GM10248 (cell line): ENCODE measurements at regions of chr2 and their contacts with region 1.

Region 1: GRCh38 chr2:44668336-44668735 is 273.2 kb upstream of the SIX3 start:
- DNase-seq: peak; percentile 37
- CTCF ChIP-seq: peak; percentile 36

Region 2: DNA sequence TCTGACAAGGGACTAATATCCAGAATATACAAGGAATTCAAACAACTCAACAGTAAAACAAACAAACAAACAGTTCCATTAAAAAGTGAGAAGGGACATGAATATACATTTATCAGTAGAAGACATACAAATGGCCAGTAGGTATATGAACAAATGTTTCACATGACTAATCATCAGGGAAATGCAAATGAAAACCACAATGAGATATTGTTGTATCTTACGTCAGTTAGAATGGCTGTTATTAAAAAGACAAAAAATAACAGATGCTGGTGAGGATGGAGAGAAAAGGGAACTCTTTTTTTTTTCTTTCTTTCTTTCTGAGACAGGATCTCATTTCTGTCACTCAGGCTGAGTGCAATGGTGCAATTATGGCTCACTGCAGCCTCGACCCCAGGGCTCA is 131.1 kb before region 1 on chr2:
- CTCF ChIA-PET with region 1: no interaction called
- POLR2A ChIA-PET with region 1: no interaction called
- DNase-seq: no peak
- CTCF ChIP-seq: no peak

Region 3: DNA sequence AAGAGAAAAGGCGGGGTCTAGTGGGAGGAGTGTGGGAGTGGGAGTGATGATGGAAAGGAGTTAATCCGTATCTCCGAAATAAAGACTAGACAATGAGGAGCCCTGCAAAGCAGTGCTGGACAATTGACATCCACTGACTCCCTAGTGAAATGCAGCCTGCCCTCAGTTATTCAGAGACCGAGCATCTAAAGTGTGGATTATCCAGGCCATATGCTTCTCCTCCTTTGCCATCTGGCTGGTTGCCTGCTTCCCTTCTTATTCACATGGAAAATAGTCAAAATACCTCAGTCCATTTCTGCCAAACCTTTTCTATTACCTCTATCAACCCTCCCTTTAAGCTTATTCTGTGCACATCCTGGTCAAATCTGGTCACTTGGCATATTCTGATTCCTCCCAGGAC is 15.6 kb before region 1 on chr2:
- CTCF ChIA-PET with region 1: interaction called, 10 read pairs
- POLR2A ChIA-PET with region 1: no interaction called
- DNase-seq: no peak
- CTCF ChIP-seq: no peak

Region 4: GRCh38 chr2:44692821-44693220 is 24.5 kb after region 1 on chr2:
- CTCF ChIA-PET with region 1: interaction called, 11 read pairs
- POLR2A ChIA-PET with region 1: no interaction called
- DNase-seq: no peak
- CTCF ChIP-seq: no peak